ENCODE measurements at regions of chr17 and their contacts with region 1.

Region 1: DNA sequence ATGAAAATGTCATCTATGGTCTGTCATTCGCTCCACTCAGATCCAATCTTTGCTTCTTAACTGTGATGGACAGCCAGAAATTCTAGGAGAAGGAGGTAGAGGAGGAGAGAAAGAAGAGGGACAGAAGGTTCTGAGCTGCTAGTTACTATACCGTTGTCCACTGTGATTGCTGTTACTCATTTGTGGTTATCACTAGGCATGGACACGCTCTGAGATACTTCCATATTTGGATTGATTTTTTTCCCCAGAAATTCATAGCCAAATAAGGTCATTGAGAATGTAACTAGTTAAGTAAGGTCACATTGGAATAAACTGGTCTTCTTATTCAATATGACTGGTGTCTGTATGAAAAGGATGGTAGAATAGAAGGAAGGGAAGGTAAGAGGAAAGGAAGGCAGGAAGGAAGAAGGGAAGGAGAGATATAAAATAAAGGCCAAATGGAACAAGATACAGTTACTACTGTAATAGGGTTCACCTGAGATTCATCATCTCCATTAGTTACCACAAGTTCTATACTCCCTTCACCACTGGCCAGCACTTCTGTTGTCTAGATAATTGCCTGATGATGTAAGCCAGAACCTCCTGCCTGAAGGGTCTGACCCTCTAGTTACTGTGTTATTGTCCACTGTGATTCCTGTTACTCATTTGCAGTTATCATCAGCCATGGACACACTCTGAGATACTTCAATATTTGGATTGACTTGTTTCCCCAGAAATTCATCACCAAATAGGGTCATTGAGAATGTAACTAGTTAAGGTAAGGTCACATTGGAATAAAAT is 2.9 kb downstream of the KRTAP9-7 start:
- DNase-seq: no peak
- H3K4me3 ChIP-seq: no peak overlapping the region
- H3K27ac ChIP-seq: no peak overlapping the region
- H3K4me1 ChIP-seq: no peaks in the 10 kb centered on the region
- H3K27me3 ChIP-seq: peaks cover 0 to 6% (median 0%) of the 10 kb centered on the region in 3 donors
- CTCF ChIP-seq: no peak
- EP300 ChIP-seq: no peak
- POLR2A ChIP-seq: no peak

Region 2: DNA sequence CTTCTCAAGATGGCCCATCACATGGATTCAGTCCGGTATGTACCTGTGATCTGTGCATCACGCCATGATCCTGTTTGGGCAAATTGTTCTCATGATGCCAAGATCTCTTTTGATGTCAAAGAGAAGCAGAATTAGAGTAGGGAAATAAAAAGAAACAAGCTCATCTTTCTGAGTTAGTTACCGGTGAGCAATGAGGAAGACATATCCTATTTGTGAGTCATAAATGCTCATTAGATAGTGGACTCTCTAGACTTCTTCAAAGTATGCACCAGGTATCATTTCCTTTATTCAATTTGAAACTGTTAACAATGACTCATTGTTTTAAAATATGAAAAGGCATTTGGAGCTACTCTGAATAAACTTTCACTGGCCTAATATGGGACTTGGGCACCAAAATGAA is 146.4 kb before region 1 on chr17:
- intact Hi-C with region 1: no loop called
- DNase-seq: no peak
- H3K4me3 ChIP-seq: no peak overlapping the region
- H3K27ac ChIP-seq: no peak overlapping the region
- H3K4me1 ChIP-seq: no peaks in the 10 kb centered on the region
- H3K27me3 ChIP-seq: no peaks in the 10 kb centered on the region
- CTCF ChIP-seq: no peak
- EP300 ChIP-seq: no peak
- POLR2A ChIP-seq: no peak

Region 3: DNA sequence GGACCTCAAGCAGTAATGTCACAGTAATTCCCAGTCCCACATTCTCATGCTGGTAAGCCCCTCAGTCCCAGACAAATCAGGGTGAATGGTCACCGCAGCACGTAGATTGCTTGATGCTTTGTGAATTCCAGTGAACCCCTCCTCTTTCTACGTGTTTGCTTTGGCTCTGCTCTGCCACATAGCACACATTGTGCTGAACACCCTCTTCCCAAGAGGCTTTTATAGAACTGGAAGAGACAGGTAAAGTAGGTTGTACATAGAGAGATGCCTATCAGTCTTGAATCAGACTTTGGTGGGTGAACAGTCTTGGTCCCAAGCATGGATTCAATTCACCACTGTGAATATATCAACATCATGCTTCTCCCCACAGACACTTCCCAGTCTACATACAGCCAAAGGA is 13.8 kb before region 1 on chr17:
- intact Hi-C with region 1: loop called (anchors 1 kb)
- DNase-seq: no peak
- H3K4me3 ChIP-seq: no peak overlapping the region
- H3K27ac ChIP-seq: no peak overlapping the region
- H3K4me1 ChIP-seq: no peaks in the 10 kb centered on the region
- H3K27me3 ChIP-seq: peaks cover 0 to 4% (median 0%) of the 10 kb centered on the region in 3 donors
- CTCF ChIP-seq: no peak
- EP300 ChIP-seq: no peak
- POLR2A ChIP-seq: no peak